Cardiac septum (tissue), 1 donor: ENCODE measurements at regions of chr9 and their contacts with region 1.

Region 1: GRCh38 chr9:84170521-84171141 is 169.9 kb downstream of the SLC28A3 start:
- DNase-seq: peak; percentile 90

Region 2: DNA sequence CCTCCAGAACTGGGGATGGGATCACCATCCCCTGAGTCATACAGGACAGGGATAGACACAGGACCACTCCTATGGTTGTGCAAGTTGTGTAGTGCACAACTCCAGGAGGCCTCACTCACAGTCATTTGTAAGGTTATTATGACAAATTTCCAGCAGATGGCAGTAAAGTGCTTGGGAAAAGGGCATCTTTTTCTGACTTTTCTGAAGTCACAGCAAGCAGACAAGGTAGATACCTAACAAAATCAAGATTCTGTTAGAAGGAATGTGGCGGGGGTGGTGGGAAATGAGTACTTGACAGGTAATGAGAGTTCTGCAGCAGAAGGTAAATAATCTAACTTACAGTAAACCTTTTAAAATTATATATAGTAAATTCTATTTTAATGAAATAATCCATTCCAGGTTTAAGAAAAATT is 232.7 kb before region 1 on chr9:
- intact Hi-C with region 1: loop called (anchors 5 kb)
- DNase-seq: peak; percentile 29

Region 3: DNA sequence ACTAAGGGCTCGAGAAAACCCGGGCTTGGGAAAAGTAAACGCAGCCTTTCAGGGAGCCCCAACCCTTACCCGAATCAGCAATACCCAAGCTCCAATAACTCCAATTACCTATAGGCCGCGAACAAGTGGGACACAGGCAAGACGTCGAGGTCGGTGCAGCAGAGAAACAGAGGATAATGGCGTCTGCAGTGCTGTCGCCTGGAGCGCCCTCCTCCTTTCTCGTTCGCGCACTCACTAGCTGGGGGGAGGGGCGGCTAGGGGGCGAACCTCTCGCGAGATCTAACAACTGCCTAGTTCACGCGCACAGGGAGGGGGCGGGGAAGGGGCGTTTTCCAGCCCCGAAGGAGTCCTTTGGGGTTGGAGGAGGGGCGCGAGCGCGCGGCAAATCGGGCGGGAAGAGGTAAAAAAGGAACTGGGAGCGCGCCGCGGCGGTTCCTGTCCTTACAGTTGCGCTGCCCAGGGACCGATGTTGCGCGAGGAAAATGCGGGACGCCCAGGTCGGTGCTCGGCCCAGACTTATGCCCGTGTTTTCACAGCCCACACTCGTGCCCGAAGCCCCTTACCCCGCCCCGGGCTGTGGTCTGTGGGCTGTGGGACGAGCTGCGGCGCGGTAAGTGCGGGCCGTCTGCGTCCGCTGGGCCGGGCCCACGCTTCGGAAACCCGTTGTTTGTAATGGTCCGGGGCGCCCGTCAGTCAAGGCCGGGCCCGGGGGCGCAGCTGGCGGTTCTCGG is 190.1 kb before region 1 on chr9 and contains the start of gene RMI1:
- intact Hi-C with region 1: loop called (anchors 5 kb)
- DNase-seq: peak; percentile 100
- total RNA-seq, gene RMI1: 3.9 TPM

Region 4: GRCh38 chr9:84061594-84062193 is 108.9 kb before region 1 on chr9:
- intact Hi-C with region 1: loop called (anchors 2 kb)
- DNase-seq: no peak

Region 5: DNA sequence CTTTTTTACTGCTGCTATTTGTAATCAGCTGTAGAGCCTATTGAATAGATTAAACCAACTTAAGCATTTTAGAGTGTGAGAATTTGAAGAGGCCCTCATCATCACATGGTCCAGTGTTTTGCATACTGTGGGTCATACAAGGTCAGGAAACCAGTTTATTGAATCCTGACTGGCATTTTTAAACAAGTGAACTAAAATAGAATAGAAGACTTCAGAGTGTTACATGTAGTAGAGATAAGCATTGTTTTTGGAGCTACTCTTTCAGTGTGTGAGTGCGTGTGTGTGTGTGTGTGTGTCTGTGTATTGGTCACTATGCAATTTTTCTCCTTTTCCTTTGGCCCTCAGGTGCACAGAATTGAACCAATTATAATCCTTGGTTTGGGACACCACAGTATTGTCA is 55.5 kb after region 1 on chr9:
- intact Hi-C with region 1: no loop called
- DNase-seq: no peak